ENCODE measurements at regions of chr15 and their contacts with region 1.

Region 1: GRCh38 chr15:34900748-34901147 is 68.8 kb downstream of the AQR start:
- DNase-seq: no peak
- ATAC-seq: peak; percentile 83 to 88

Region 2: GRCh38 chr15:34708422-34708821 is 192.3 kb before region 1 on chr15:
- intact Hi-C with region 1: loop called in 1 of 2 experiments (anchors 5 kb)
- DNase-seq: no peak
- ATAC-seq: peak; percentile 77 to 83

Region 3: DNA sequence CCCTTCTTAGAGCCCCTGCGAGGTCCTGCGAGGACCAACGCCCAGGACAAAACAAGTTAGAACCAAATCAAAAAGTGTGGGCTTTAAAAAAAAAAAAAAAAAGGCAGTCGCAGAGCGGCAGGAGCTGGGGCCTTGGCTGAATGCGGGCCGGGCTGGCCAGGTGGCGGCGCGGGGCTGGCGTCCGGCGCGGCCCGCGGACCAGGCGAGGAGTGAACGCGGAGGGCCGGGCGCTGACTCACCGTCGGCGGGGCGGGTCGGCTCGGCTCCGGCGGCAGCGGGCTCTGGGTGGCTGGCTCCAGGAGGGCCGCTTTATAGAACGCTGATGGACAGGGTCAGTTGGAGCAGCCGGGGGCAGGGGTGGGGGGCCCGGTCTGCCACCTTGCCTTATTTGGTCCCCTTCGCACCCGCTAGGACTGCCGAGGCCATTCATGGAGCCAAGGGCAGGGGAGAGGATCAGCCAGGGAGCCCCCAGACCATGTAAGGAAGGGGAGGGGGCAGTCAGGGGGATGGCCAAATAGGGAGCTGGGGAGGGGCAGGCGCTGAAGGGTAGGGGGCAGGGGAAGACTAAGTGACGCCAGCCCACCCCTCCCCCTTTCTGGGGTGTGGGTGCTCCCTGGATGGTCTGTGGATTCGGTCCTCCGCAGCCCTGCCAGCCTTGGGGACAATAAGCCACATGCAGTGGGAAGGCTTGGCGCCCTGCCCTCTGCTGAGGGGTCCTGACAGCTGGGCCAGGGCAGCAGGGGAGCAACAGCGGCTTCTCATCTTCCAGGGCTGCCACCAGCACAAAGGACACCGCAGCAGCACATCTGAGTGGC is 105.3 kb before region 1 on chr15 and contains the start of gene ACTC1:
- intact Hi-C with region 1: loop called in 1 of 2 experiments (anchors 5 kb)
- DNase-seq: peak; percentile 69
- ATAC-seq: peak; percentile 51 to 64
- total RNA-seq, gene ACTC1: 12,863 to 14,182 TPM

Region 4: DNA sequence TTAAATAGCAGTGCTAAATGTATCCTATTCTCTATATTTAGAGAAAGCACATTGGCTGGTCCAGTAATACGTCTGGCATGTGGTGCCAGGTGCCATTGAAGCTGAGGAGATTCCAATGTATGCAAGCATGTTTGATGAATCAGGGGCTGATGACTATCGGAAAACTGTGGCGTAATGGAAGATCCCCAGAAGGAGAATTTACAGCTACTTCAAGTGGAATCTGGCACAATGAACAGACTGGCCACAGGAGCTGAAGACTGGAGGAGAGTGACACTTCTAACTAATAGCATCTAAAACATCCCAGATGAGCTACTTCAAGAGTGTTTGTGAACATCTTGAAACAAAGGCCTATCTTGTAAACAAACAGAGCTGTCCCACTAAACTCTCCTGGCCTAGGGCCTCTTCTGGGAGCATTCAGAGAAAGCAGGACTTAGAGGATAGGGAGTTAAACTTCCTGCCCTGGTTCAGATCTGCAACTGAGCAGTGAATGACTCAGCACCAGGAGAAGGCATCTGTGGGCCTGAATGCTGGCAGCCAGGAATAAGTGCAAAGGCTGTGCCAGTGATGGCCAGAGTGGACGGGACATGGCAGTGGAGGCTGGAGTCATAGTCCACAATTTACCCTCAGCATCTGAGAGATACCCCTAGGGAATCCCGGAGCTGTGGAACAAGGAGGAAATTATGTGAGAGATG is 90.1 kb before region 1 on chr15:
- intact Hi-C with region 1: loop called in 1 of 2 experiments (anchors 5 kb)
- DNase-seq: no peak
- ATAC-seq: peak; percentile 50 to 90

Region 5: GRCh38 chr15:35054380-35054779 is 153.6 kb after region 1 on chr15:
- intact Hi-C with region 1: no loop called
- DNase-seq: no peak
- ATAC-seq: no peak

Region 6: GRCh38 chr15:35115155-35115725 is 214.5 kb after region 1 on chr15:
- intact Hi-C with region 1: no loop called
- DNase-seq: no peak
- ATAC-seq: no peak

Region 7: DNA sequence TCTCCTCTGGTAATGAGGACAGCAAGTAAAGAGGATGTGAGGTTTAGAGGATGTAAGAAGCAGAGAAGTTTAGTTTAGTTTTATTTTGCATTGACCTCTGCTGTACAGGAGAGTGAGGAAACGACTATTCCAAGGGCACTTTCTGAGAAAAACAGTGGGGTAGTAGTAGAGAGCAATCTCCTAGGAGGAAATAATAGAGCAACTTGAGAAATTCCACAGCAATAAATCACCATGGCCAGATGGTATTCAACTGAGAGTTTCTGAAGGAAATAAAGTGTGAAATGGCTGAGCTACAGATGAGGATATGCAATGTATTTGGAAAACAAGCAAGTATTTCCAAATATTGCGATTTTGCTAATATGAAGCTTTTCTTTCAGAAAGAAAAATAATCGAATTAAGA is 526.3 kb after region 1 on chr15:
- intact Hi-C with region 1: no loop called
- DNase-seq: no peak
- ATAC-seq: peak; percentile 30 to 53

Measured in left cardiac atrium (tissue), 4 donors.